ENCODE measurements at regions of chr12 and their contacts with region 1.

Region 1: DNA sequence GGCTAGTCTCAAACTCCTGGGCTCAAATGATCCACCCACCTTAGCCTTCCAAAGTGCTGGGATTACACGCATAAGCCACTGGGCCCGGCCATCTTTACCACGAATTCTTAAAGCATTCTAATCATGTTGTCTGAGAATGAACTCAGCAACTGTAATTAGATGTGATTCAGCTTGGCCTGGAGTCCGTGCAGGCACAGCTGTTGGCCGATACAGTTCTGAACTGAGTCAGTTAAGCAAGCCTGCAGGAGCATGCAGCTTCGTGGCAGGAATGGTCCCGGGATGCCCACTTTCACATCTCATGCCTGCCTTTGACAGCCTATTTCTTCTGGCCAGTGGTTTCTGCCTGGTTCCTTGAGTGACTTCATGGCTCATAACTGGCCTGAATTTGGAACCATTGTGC is 194.1 kb downstream of the ANO6 start:
- DNase-seq: peak in 4 of 5 donors; percentile 23 to 42 (median 28)
- H3K4me3 ChIP-seq: no peak overlapping the region
- H3K27ac ChIP-seq: no peak overlapping the region
- H3K4me1 ChIP-seq: peaks cover 17% of the 10 kb centered on the region
- H3K27me3 ChIP-seq: no peaks in the 10 kb centered on the region
- CTCF ChIP-seq: no peak
- EP300 ChIP-seq: no peak
- POLR2A ChIP-seq: no peak

Region 2: DNA sequence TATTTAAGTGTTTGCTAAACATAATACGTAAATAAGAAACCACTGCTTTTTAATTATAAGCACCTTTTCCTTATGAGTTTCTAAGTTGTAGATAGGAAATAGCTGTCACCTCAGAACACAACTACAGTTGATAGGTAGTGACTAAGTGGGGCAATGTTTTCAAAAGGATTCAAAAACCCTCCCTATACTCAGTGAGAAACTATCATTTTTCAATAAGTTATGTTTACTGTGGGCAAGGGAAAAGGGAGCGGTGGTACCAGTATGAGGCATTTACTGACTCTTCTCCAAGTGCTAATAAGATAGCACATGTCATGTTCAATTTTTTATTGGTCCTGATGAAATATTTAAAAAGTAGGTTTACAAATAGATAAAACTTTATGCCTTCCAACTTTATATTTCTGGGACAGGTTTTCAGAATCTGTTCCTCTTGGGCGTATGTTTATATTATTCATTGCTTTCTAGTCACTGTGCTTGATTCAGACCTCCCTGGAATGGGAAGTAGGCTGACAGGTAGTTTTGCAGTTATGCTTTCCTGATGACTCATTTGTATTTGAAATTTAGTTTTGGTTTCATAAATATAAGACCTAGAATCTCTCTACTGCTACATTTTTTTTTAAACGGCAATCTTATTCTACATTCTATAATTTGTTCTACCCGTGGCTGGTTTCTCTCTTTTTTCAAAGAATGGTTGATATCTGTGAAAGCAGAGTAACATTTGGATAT is 1421.0 kb before region 1 on chr12:
- intact Hi-C with region 1: loop called in 1 of 4 experiments (anchors 5 kb)
- DNase-seq: no peak
- H3K4me3 ChIP-seq: no peak overlapping the region
- H3K27ac ChIP-seq: no peak overlapping the region
- H3K4me1 ChIP-seq: no peaks in the 10 kb centered on the region
- H3K27me3 ChIP-seq: no peaks in the 10 kb centered on the region
- CTCF ChIP-seq: no peak
- EP300 ChIP-seq: no peak
- POLR2A ChIP-seq: no peak

Measured in ovary (tissue), 10 donors.